ENCODE measurements at regions of chrX and their contacts with region 1.

Region 1: GRCh38 chrX:64894454-64895038 is 81.7 kb downstream of the ZC4H2 start:
- DNase-seq: peak in 12 of 14 experiments; percentile 1 to 49 (median 10)
- ATAC-seq: no peak
- H3K4me3 ChIP-seq: no peak overlapping the region
- H3K4me3 Mint-ChIP-seq: no peak overlapping the region
- H3K27ac ChIP-seq: no peak overlapping the region
- H3K27ac Mint-ChIP-seq: no peak overlapping the region
- H3K4me1 ChIP-seq: no peaks in the 10 kb centered on the region
- H3K4me1 Mint-ChIP-seq: no peaks in the 10 kb centered on the region
- H3K27me3 ChIP-seq: no peaks in the 10 kb centered on the region
- H3K27me3 Mint-ChIP-seq: no peaks in the 10 kb centered on the region
- CTCF ChIP-seq: peak; percentile 24

Region 2: DNA sequence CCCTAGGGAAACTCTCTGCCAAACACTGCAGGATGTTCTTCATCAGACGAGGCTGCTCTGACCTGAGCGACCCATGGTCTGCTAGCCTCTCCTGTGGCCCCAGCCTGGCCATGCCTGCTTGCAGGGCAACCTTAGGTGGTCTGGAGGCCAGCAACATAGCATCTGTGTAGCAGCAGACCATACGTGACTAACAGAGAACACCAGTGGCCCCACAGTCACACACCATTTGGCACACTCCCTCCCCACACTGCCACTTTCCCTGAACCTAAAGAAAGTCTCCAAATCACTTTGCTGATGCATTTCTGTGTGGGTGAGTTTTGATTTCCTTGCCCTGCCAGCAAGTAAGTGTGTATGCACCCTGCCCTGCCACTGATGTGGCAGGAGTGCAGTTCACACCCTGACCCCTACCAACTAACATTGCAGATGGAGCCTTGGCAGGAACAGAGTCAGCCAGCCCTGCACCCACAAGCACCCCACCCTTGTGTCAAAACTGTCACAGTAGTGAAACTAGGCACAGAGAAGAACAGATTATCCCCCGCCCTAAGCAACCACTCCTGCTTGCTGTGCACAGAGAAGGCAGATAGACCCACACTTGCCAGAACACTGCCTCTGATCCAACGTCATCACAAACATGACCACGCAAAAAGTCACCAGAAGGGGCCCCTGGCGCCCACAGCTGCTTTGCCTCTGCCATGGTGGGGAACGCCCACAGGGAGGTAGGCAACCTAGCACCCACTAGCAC is 1792.5 kb before region 1 on chrX:
- CTCF ChIA-PET with region 1: no interaction called
- POLR2A ChIA-PET with region 1: no interaction called
- intact Hi-C with region 1: no loop called
- DNase-seq: no peak
- ATAC-seq: no peak
- H3K4me3 ChIP-seq: no peak overlapping the region
- H3K4me3 Mint-ChIP-seq: no peak overlapping the region
- H3K27ac ChIP-seq: no peak overlapping the region
- H3K27ac Mint-ChIP-seq: no peak overlapping the region
- H3K4me1 ChIP-seq: no peaks in the 10 kb centered on the region
- H3K4me1 Mint-ChIP-seq: no peaks in the 10 kb centered on the region
- H3K27me3 ChIP-seq: no peaks in the 10 kb centered on the region
- H3K27me3 Mint-ChIP-seq: no peaks in the 10 kb centered on the region
- CTCF ChIP-seq: no peak

Region 3: DNA sequence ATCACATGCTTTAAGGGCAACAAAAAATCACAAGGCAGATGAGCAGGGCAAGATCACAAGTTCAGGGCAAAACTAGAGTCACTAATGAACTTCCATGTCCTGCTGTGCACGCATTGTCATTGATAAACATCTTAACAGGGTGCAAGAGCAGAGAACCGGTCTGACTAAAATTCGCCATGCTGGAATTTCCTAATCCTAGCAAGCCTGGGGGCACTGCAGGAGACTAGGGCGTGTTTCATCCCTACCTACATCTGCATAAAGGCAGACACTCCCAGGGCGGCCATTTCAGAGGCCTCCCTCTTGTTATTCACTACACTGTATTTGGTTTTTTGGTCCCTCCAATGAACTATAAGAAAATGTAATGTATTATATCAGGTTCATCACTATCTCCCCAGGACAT is 1313.1 kb before region 1 on chrX:
- CTCF ChIA-PET with region 1: no interaction called
- POLR2A ChIA-PET with region 1: no interaction called
- intact Hi-C with region 1: no loop called
- DNase-seq: no peak
- ATAC-seq: no peak
- H3K4me3 ChIP-seq: no peak overlapping the region
- H3K4me3 Mint-ChIP-seq: no peak overlapping the region
- H3K27ac ChIP-seq: no peak overlapping the region
- H3K27ac Mint-ChIP-seq: no peak overlapping the region
- H3K4me1 ChIP-seq: no peaks in the 10 kb centered on the region
- H3K4me1 Mint-ChIP-seq: no peaks in the 10 kb centered on the region
- H3K27me3 ChIP-seq: no peaks in the 10 kb centered on the region
- H3K27me3 Mint-ChIP-seq: no peaks in the 10 kb centered on the region
- CTCF ChIP-seq: no peak

Region 4: GRCh38 chrX:64536736-64537135 is 357.8 kb before region 1 on chrX:
- CTCF ChIA-PET with region 1: no interaction called
- POLR2A ChIA-PET with region 1: no interaction called
- intact Hi-C with region 1: no loop called
- DNase-seq: no peak
- ATAC-seq: no peak
- H3K4me3 ChIP-seq: no peak overlapping the region
- H3K4me3 Mint-ChIP-seq: no peak overlapping the region
- H3K27ac ChIP-seq: no peak overlapping the region
- H3K27ac Mint-ChIP-seq: no peak overlapping the region
- H3K4me1 ChIP-seq: no peaks in the 10 kb centered on the region
- H3K4me1 Mint-ChIP-seq: no peaks in the 10 kb centered on the region
- H3K27me3 ChIP-seq: no peaks in the 10 kb centered on the region
- H3K27me3 Mint-ChIP-seq: no peaks in the 10 kb centered on the region
- CTCF ChIP-seq: no peak

Region 5: GRCh38 chrX:64867217-64867616 is 27.3 kb before region 1 on chrX:
- CTCF ChIA-PET with region 1: no interaction called
- POLR2A ChIA-PET with region 1: no interaction called
- intact Hi-C with region 1: no loop called
- DNase-seq: no peak
- ATAC-seq: no peak
- H3K4me3 ChIP-seq: no peak overlapping the region
- H3K4me3 Mint-ChIP-seq: no peak overlapping the region
- H3K27ac ChIP-seq: no peak overlapping the region
- H3K27ac Mint-ChIP-seq: no peak overlapping the region
- H3K4me1 ChIP-seq: no peaks in the 10 kb centered on the region
- H3K4me1 Mint-ChIP-seq: no peaks in the 10 kb centered on the region
- H3K27me3 ChIP-seq: no peaks in the 10 kb centered on the region
- H3K27me3 Mint-ChIP-seq: no peaks in the 10 kb centered on the region
- CTCF ChIP-seq: no peak

Region 6: DNA sequence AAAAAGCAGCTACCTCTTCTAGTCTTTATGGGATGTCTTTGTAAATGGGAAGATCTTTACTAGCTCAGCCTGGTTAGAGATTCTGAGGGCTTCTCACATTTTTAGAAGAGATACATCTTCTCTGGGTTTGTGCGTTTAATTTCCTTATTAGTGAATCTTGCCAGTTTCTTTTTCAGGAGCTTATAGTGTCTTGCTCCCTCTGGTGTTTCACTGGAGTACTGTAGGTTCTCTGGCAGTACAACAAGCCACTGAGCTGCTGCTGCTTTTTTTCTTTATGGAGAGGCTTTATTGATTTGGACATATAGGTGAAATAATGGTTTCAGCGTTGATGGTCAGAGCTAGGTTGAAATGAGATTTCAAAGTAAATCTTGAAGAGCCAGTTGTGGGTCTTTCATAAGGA is 557.1 kb after region 1 on chrX:
- CTCF ChIA-PET with region 1: no interaction called
- POLR2A ChIA-PET with region 1: no interaction called
- intact Hi-C with region 1: loop called in 1 of 2 experiments (anchors 10 kb)
- DNase-seq: peak in 4 of 14 experiments; percentile 13 to 34 (median 32)
- ATAC-seq: no peak
- H3K4me3 ChIP-seq: no peak overlapping the region
- H3K4me3 Mint-ChIP-seq: no peak overlapping the region
- H3K27ac ChIP-seq: no peak overlapping the region
- H3K27ac Mint-ChIP-seq: no peak overlapping the region
- H3K4me1 ChIP-seq: no peaks in the 10 kb centered on the region
- H3K4me1 Mint-ChIP-seq: no peaks in the 10 kb centered on the region
- H3K27me3 ChIP-seq: no peaks in the 10 kb centered on the region
- H3K27me3 Mint-ChIP-seq: no peaks in the 10 kb centered on the region
- CTCF ChIP-seq: peak; percentile 14

Region 7: GRCh38 chrX:65528705-65529340 is 634.3 kb after region 1 on chrX:
- CTCF ChIA-PET with region 1: no interaction called
- POLR2A ChIA-PET with region 1: no interaction called
- intact Hi-C with region 1: loop called in 1 of 2 experiments (anchors 2 kb)
- DNase-seq: peak; percentile 19 to 75 (median 42)
- ATAC-seq: peak; percentile 60
- H3K4me3 ChIP-seq: no peak overlapping the region
- H3K4me3 Mint-ChIP-seq: peak overlapping the region; percentile 8
- H3K27ac ChIP-seq: no peak overlapping the region
- H3K27ac Mint-ChIP-seq: no peak overlapping the region
- H3K4me1 ChIP-seq: peaks cover 10% of the 10 kb centered on the region
- H3K4me1 Mint-ChIP-seq: peaks cover 22% of the 10 kb centered on the region
- H3K27me3 ChIP-seq: no peaks in the 10 kb centered on the region
- H3K27me3 Mint-ChIP-seq: no peaks in the 10 kb centered on the region
- CTCF ChIP-seq: peak; percentile 85